Colonic mucosa (tissue), 4 donors: ENCODE measurements at regions of chrX and their contacts with region 1.

Region 1: GRCh38 chrX:151753313-151754041 is 18.9 kb downstream of the CNGA2 start:
- DNase-seq: peak; percentile 34
- H3K4me3 ChIP-seq: no peak overlapping the region
- H3K27ac ChIP-seq: no peak overlapping the region
- H3K4me1 ChIP-seq: no peaks in the 10 kb centered on the region
- H3K27me3 ChIP-seq: no peaks in the 10 kb centered on the region
- CTCF ChIP-seq: peak; percentile 83

Region 2: GRCh38 chrX:151516538-151517187 is 236.8 kb before region 1 on chrX:
- intact Hi-C with region 1: no loop called
- DNase-seq: no peak
- H3K4me3 ChIP-seq: no peak overlapping the region
- H3K27ac ChIP-seq: no peak overlapping the region
- H3K4me1 ChIP-seq: no peaks in the 10 kb centered on the region
- H3K27me3 ChIP-seq: no peaks in the 10 kb centered on the region
- CTCF ChIP-seq: no peak

Region 3: GRCh38 chrX:152635941-152636340 is 882.5 kb after region 1 on chrX:
- intact Hi-C with region 1: loop called (anchors 2 kb)
- DNase-seq: peak; percentile 24
- H3K4me3 ChIP-seq: no peak overlapping the region
- H3K27ac ChIP-seq: no peak overlapping the region
- H3K4me1 ChIP-seq: no peaks in the 10 kb centered on the region
- H3K27me3 ChIP-seq: no peaks in the 10 kb centered on the region
- CTCF ChIP-seq: peak; percentile 36

Region 4: GRCh38 chrX:152821145-152821765 is 1067.8 kb after region 1 on chrX:
- intact Hi-C with region 1: loop called (anchors 5 kb)
- DNase-seq: peak; percentile 44
- H3K4me3 ChIP-seq: no peak overlapping the region
- H3K27ac ChIP-seq: no peak overlapping the region
- H3K4me1 ChIP-seq: no peaks in the 10 kb centered on the region
- H3K27me3 ChIP-seq: no peaks in the 10 kb centered on the region
- CTCF ChIP-seq: peak; percentile 45